ENCODE measurements at regions of chr22 and their contacts with region 1.

Region 1: GRCh38 chr22:36977947-36978660 is 41.1 kb downstream of the TST start:
- DNase-seq: peak; percentile 91
- ATAC-seq: peak; percentile 65
- H3K4me3 Mint-ChIP-seq: peak overlapping the region; percentile 77
- H3K27ac Mint-ChIP-seq: no peak overlapping the region
- H3K4me1 Mint-ChIP-seq: peaks cover 13% of the 10 kb centered on the region
- H3K27me3 Mint-ChIP-seq: peaks cover 15% of the 10 kb centered on the region
- CTCF ChIP-seq: peak; percentile 90

Region 2: GRCh38 chr22:36560899-36561811 is 416.9 kb before region 1 on chr22:
- CTCF ChIA-PET with region 1: no interaction called
- POLR2A ChIA-PET with region 1: no interaction called
- DNase-seq: no peak
- ATAC-seq: peak; percentile 29
- H3K4me3 Mint-ChIP-seq: no peak overlapping the region
- H3K27ac Mint-ChIP-seq: peak overlapping the region; percentile 89
- H3K4me1 Mint-ChIP-seq: peaks cover 33% of the 10 kb centered on the region
- H3K27me3 Mint-ChIP-seq: no peaks in the 10 kb centered on the region
- CTCF ChIP-seq: no peak

Region 3: GRCh38 chr22:36757668-36758211 is 220.4 kb before region 1 on chr22:
- CTCF ChIA-PET with region 1: interaction called, 26 read pairs
- POLR2A ChIA-PET with region 1: no interaction called
- DNase-seq: peak; percentile 93
- ATAC-seq: peak; percentile 92
- H3K4me3 Mint-ChIP-seq: no peak overlapping the region
- H3K27ac Mint-ChIP-seq: no peak overlapping the region
- H3K4me1 Mint-ChIP-seq: no peaks in the 10 kb centered on the region
- H3K27me3 Mint-ChIP-seq: peaks cover 12% of the 10 kb centered on the region
- CTCF ChIP-seq: peak; percentile 88

Region 4: DNA sequence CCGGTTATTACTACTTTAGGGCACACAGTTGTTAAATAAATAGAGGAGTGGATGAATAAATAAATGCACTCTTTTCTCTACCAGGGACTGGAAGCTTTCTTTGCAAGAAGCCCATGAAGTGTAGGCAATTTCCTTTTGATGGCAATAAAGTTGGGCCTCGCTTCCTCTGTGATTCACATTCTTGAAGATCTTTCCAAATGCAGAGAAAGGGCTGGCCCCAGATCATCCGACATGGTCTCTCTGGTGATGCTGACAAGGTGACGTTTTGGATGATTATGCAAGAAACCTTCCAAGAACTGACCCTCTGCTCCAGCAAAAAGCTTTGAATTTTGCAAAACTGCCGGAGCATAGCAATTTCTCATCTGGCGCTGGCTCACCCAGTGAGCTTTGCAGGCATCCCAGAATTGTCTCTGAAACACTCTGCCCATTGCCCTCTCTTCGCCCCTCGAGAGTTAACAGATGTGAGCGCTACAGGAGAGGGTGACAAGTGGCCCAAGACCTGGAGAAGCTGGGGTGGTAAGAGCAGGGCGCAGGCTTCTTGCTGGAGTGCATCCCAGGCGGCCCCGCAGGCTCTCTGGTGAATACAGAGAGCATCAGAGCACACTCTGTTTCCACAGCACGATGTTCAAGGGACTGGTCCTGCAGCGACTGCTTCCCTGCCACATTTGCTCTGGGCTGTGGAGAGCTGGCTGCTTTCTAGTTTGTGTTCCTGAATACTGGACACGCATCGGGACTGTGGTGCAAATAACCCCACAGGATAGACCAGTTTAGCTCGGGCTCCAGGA is 190.7 kb before region 1 on chr22:
- CTCF ChIA-PET with region 1: interaction called, 23 read pairs
- POLR2A ChIA-PET with region 1: no interaction called
- DNase-seq: no peak
- ATAC-seq: no peak
- H3K4me3 Mint-ChIP-seq: no peak overlapping the region
- H3K27ac Mint-ChIP-seq: no peak overlapping the region
- H3K4me1 Mint-ChIP-seq: peaks cover 14% of the 10 kb centered on the region
- H3K27me3 Mint-ChIP-seq: peaks cover 13% of the 10 kb centered on the region
- CTCF ChIP-seq: no peak

Region 5: DNA sequence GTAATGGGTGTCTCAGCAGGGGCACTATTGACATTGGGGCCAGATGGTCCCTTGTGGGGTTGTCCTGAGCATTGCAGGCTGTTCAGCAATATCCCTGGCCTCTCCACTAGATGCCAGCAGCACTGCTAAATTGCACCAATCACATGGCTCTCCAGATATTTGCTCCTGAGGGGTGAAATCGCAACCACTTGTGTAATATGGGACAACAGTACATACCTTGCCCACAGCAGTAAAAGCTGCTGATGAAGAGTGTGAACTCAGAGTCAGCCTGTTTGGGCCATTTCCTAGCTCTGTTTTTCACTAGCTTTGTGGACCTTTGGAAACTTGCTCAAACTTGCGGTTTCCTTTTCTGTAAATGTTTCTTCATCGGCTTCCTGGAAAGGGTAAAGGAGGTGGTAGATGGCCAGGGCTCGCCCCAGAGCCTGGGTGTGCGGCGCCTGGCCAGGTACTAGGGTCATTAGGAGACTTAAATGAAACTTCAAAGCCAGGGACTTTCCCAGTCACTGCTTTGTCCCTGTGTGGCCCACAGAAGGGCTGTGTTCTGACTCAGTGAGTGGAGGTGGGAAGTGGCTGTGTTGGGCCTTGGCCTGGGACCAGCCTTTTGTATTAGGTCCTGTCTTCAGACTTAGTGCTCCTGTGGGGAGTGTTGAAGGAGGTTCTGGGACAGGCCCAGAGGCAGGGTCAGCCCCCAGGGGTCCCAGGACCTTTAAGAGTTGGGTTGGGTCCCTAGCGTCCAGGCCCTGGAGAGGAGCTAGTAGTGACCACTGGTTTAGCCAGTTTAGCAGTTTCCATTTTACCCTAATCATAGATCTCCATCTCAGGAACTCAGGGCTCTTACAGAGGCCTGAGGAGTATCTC is 104.2 kb before region 1 on chr22:
- CTCF ChIA-PET with region 1: interaction called, 29 read pairs
- POLR2A ChIA-PET with region 1: no interaction called
- DNase-seq: peak; percentile 25
- ATAC-seq: peak; percentile 85
- H3K4me3 Mint-ChIP-seq: no peak overlapping the region
- H3K27ac Mint-ChIP-seq: no peak overlapping the region
- H3K4me1 Mint-ChIP-seq: peaks cover 10% of the 10 kb centered on the region
- H3K27me3 Mint-ChIP-seq: peaks cover 8% of the 10 kb centered on the region; the same call in 1 of the 2 replicates
- CTCF ChIP-seq: no peak

Region 6: GRCh38 chr22:36928841-36929461 is 49.2 kb before region 1 on chr22:
- CTCF ChIA-PET with region 1: interaction called, 10 read pairs
- POLR2A ChIA-PET with region 1: no interaction called
- DNase-seq: no peak
- ATAC-seq: no peak; the same call in 1 of the 2 replicates
- H3K4me3 Mint-ChIP-seq: no peak overlapping the region
- H3K27ac Mint-ChIP-seq: no peak overlapping the region
- H3K4me1 Mint-ChIP-seq: peaks cover 2% of the 10 kb centered on the region; the same call in 1 of the 2 replicates
- H3K27me3 Mint-ChIP-seq: no peaks in the 10 kb centered on the region; the same call in 1 of the 2 replicates
- CTCF ChIP-seq: no peak

Region 7: GRCh38 chr22:36966851-36967540 is 11.1 kb before region 1 on chr22:
- CTCF ChIA-PET with region 1: interaction called, 41 read pairs
- POLR2A ChIA-PET with region 1: no interaction called
- DNase-seq: no peak
- ATAC-seq: no peak
- H3K4me3 Mint-ChIP-seq: no peak overlapping the region
- H3K27ac Mint-ChIP-seq: no peak overlapping the region
- H3K4me1 Mint-ChIP-seq: peaks cover 18% of the 10 kb centered on the region
- H3K27me3 Mint-ChIP-seq: peaks cover 5% of the 10 kb centered on the region; the same call in 1 of the 2 replicates
- CTCF ChIP-seq: no peak

Region 8: GRCh38 chr22:37043828-37044538 is 65.9 kb after region 1 on chr22:
- CTCF ChIA-PET with region 1: interaction called, 10 read pairs
- POLR2A ChIA-PET with region 1: no interaction called
- DNase-seq: peak; percentile 50
- ATAC-seq: peak; percentile 77
- H3K4me3 Mint-ChIP-seq: no peak overlapping the region
- H3K27ac Mint-ChIP-seq: no peak overlapping the region
- H3K4me1 Mint-ChIP-seq: peaks cover 10% of the 10 kb centered on the region
- H3K27me3 Mint-ChIP-seq: peaks cover 11% of the 10 kb centered on the region
- CTCF ChIP-seq: no peak

Region 9: GRCh38 chr22:37139762-37140161 is 161.7 kb after region 1 on chr22:
- CTCF ChIA-PET with region 1: no interaction called
- POLR2A ChIA-PET with region 1: no interaction called
- DNase-seq: no peak
- ATAC-seq: peak; percentile 46
- H3K4me3 Mint-ChIP-seq: no peak overlapping the region
- H3K27ac Mint-ChIP-seq: no peak overlapping the region
- H3K4me1 Mint-ChIP-seq: no peaks in the 10 kb centered on the region
- H3K27me3 Mint-ChIP-seq: no peaks in the 10 kb centered on the region; the same call in 1 of the 2 replicates
- CTCF ChIP-seq: no peak